CD4-positive, alpha-beta T cell (primary cell): ENCODE measurements at regions of chr2 and their contacts with region 1.

Region 1: DNA sequence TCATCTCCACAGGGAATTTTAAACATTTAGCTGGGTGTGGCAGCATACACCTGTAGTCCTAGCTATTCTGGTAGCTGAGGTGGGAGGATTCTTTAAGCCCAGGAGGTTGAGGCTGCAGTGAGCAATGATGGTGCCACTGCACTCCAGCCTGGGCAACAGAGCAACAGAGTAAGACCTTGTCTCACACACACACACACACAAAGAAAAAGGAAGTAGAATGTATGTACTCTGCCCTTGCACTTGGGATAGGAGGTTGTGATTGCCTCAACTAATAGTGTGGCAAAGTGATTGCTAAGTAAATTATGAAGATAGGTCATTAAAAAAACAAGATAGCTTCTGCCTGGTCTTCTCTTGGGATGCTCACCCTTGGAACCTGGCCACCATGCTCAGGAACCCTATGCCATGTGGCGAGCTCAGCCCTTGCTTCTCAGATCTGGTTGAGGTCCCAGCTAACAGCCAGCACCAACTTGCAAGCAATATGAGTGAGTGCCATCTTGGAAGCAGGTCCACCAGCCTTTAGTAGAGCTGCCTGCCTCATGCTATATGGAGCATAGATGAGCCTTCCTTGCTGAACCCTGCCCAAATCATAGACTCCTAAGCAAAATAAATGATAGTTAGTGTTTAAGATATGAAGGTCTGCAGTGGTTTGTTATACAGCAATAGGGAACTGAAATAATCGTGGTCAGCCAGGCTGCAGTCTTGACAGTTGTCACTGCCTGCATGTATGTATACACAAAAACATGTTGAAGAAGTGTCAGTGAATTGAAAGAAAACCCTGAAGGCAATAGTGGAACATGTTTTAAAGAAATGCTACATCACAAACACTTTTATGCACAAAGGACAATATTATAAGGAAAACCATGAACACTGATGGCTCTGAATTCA is 30.1 kb upstream of the PNO1 start:
- DNase-seq: no peak
- ATAC-seq: no peak
- H3K4me3 ChIP-seq: no peak overlapping the region
- H3K4me3 Mint-ChIP-seq: no peak overlapping the region
- H3K27ac ChIP-seq: no peak overlapping the region
- H3K27ac Mint-ChIP-seq: no peak overlapping the region
- H3K4me1 ChIP-seq: peaks cover under 1% of the 10 kb centered on the region
- H3K4me1 Mint-ChIP-seq: peaks cover under 1% of the 10 kb centered on the region
- H3K27me3 ChIP-seq: no peaks in the 10 kb centered on the region
- H3K27me3 Mint-ChIP-seq: no peaks in the 10 kb centered on the region
- CTCF ChIP-seq: no peak

Region 2: GRCh38 chr2:67806816-67807215 is 320.8 kb before region 1 on chr2:
- CTCF ChIA-PET with region 1: no interaction called
- POLR2A ChIA-PET with region 1: no interaction called
- intact Hi-C with region 1: no loop called
- DNase-seq: no peak
- ATAC-seq: no peak
- H3K4me3 ChIP-seq: no peak overlapping the region
- H3K4me3 Mint-ChIP-seq: no peak overlapping the region
- H3K27ac ChIP-seq: no peak overlapping the region
- H3K27ac Mint-ChIP-seq: no peak overlapping the region
- H3K4me1 ChIP-seq: no peaks in the 10 kb centered on the region
- H3K4me1 Mint-ChIP-seq: no peaks in the 10 kb centered on the region
- H3K27me3 ChIP-seq: peaks cover 0 to 4% of the 10 kb centered on the region in 2 experiments
- H3K27me3 Mint-ChIP-seq: peaks cover 22% of the 10 kb centered on the region
- CTCF ChIP-seq: no peak

Region 3: GRCh38 chr2:68185541-68186164 is 58.1 kb after region 1 on chr2:
- CTCF ChIA-PET with region 1: interaction called, 3 read pairs
- POLR2A ChIA-PET with region 1: no interaction called
- intact Hi-C with region 1: loop called in 1 of 2 experiments (anchors 5 kb)
- DNase-seq: peak; percentile 25 to 82 (median 42)
- ATAC-seq: peak; percentile 49
- H3K4me3 ChIP-seq: no peak overlapping the region
- H3K4me3 Mint-ChIP-seq: no peak overlapping the region
- H3K27ac ChIP-seq: no peak overlapping the region
- H3K27ac Mint-ChIP-seq: peak overlapping the region; percentile 65
- H3K4me1 ChIP-seq: no peaks in the 10 kb centered on the region
- H3K4me1 Mint-ChIP-seq: peaks cover 54% of the 10 kb centered on the region
- H3K27me3 ChIP-seq: no peaks in the 10 kb centered on the region
- H3K27me3 Mint-ChIP-seq: no peaks in the 10 kb centered on the region
- CTCF ChIP-seq: peak; percentile 73